AG04450 (cell line): ENCODE measurements at regions of chr12 and their contacts with region 1.

Region 1: GRCh38 chr12:57005980-57006808 is at the start of gene ZBTB39:
- DNase-seq: no peak
- H3K4me3 ChIP-seq: peak within 1 kb of the TSS; percentile 79
- H3K27ac ChIP-seq: peak within 1 kb of the TSS; percentile 57
- H3K27me3 ChIP-seq: no peaks in the 10 kb centered on the region
- CTCF ChIP-seq: peak; percentile 46
- polyA plus RNA-seq, gene ZBTB39: 5.8 and 6.4 TPM in 2 replicates

Region 2: DNA sequence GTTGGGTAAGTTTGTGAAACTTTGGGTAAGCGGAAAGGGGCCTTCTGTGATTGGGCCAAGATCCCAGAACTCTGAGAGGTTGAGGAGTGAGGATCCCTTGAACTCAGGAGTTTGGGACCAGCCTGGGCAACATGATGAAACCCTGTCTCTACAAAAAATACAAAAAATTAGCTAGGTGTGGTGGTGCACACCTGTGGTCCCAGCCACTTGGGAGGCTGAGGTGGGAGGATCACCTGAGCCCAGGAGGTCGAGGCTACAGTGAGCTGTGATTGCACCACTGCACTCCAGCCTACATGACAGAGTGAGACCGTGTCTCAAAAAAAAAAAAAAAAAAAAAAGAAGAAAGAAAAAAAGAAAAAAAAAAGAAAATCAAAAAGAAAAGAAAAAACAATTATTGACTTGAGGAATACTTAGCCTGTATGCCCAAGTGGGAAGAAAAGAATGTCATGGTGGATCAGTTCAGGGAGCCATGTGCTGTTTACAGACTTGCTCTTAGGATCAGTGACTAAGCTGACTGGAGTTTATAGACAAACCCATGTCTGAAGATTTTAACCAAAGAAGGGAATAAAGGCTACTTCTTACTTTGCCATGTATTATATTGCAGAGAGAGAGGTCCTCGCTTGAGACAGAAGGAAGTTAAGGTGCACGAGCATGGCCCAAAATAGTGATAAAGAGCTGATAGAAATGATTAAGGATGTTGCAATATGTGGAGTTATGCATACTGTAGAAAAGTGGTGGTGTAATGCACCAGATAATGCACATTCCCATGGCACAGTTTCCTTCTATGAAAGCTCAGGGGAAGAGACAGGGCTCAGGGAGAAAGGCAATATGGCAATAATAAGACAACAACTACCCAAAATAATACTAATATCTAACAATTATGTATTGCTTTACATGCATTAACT is 242.2 kb before region 1 on chr12:
- CTCF ChIA-PET with region 1: interaction called, 83 read pairs
- POLR2A ChIA-PET with region 1: no interaction called
- DNase-seq: peak; percentile 36
- H3K4me3 ChIP-seq: no peak overlapping the region
- H3K27ac ChIP-seq: no peak overlapping the region
- H3K27me3 ChIP-seq: no peaks in the 10 kb centered on the region
- CTCF ChIP-seq: no peak

Region 3: DNA sequence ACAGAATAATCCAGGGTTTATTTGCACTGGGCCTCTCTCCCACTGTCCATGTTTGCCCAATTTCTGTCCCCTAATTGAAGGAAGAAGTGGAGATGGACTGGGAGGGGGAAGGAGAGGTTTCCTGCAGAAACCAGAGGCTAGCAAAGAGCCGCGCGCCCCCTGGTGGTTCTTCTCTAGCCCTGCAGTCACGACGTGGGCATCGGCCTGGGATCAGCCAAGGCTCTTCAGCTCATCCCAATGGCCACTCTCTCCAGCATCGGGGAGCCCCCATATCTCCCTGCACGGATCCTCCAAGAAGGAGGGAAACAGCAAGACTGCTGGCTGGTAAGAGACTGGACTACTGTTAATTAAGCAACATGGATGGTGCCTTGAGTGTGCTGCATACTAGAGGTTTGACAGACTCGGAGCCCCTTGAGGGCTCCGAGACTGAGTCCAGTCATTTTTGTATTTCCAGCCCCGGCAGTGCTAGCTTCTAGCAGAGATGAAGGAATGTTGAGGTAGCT is 18.6 kb before region 1 on chr12:
- CTCF ChIA-PET with region 1: interaction called, 25 read pairs
- POLR2A ChIA-PET with region 1: no interaction called
- DNase-seq: peak; percentile 38
- H3K4me3 ChIP-seq: no peak overlapping the region
- H3K27ac ChIP-seq: no peak overlapping the region
- H3K27me3 ChIP-seq: peaks cover 5% of the 10 kb centered on the region
- CTCF ChIP-seq: peak; percentile 97

Region 4: GRCh38 chr12:57016318-57016717 is 10.1 kb after region 1 on chr12 and contains the start of gene TAC3:
- CTCF ChIA-PET with region 1: interaction called, 18 read pairs
- POLR2A ChIA-PET with region 1: no interaction called
- DNase-seq: no peak
- H3K4me3 ChIP-seq: no peak within 1 kb of the TSS
- H3K27ac ChIP-seq: no peak within 1 kb of the TSS
- H3K27me3 ChIP-seq: peaks cover 43% of the 10 kb centered on the region
- CTCF ChIP-seq: no peak
- polyA plus RNA-seq, gene TAC3: 8.0 and 8.9 TPM in 2 replicates

Region 5: DNA sequence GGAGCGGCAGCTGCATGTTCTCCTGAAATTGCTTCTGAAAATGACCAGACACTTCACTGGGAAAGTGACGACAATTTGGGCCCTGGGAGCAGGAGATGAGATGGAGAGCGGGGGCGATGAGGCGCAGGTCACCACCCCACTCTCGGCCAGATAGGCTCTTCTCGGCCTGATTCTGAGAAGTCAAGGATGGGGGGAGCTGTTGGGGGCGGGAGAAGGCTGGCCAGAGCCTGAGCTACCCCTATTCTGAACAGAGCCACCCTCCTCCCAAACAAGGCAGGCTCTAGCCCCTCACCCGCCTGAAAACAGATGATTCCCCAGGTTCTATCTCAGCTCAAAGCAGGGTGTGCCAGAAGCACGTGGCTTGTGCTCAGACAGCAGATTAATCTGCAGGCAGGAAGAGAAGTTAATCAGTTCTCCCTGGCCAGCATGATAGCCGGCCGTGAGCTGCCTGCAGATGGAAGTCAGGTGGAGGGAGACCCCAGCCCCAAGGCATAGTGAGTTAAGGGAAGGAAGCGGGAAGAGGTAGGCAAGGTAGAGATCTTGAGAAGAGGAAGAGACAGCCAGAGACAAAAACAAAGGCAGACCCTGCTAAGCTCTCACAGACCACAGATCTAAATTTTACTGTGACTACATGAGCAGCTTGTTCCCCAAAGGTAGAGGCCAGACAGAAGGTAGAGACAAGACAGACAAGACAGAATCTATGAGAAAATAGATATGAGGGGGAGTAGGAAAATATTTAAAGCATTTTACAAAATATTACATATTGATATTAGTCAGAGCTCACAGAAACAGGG is 21.0 kb after region 1 on chr12:
- CTCF ChIA-PET with region 1: interaction called, 18 read pairs
- POLR2A ChIA-PET with region 1: no interaction called
- DNase-seq: no peak
- H3K4me3 ChIP-seq: no peak overlapping the region
- H3K27ac ChIP-seq: no peak overlapping the region
- H3K27me3 ChIP-seq: peaks cover 54% of the 10 kb centered on the region
- CTCF ChIP-seq: no peak

Region 6: GRCh38 chr12:57063991-57064685 is 57.9 kb after region 1 on chr12:
- CTCF ChIA-PET with region 1: interaction called, 273 read pairs
- POLR2A ChIA-PET with region 1: interaction called, 4 read pairs
- DNase-seq: no peak
- H3K4me3 ChIP-seq: no peak overlapping the region
- H3K27ac ChIP-seq: no peak overlapping the region
- H3K27me3 ChIP-seq: no peaks in the 10 kb centered on the region
- CTCF ChIP-seq: no peak